CD4-positive, alpha-beta T cell (primary cell): ENCODE measurements at regions of chr12 and their contacts with region 1.

Region 1: DNA sequence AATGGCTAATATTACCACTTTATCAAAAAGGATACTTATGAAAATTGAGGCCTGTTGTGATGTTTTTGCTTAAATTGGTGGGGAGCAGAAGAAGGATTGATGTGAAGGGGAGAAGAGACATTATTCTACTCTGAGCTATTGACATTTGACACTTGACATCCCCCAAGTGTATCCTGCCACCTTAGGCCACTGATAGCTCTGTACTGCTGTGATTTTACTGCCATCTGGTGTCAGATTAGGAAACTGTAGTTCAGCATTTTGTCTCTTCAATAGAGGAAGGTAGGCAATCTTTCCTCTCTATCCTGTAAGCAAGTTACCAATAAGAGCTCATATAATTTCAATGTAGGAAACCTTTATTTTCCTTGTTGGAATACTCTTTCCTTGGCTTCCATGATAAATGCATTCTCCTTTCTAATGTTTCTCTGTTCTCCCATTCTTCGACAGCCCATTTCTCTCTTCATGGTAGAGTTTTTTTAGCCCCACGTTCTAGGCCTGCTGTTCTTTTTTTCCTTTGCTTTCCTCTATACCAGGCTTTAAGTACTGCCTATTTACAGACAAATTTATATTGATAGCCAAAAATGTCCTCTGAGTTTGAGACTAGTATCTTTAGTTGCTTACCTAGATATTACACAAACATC is 46.3 kb downstream of the PPHLN1 start:
- DNase-seq: peak in 5 of 14 experiments; percentile 3 to 74 (median 63)
- ATAC-seq: peak; percentile 95
- H3K4me3 ChIP-seq: no peak overlapping the region
- H3K4me3 Mint-ChIP-seq: no peak overlapping the region
- H3K27ac ChIP-seq: no peak overlapping the region
- H3K27ac Mint-ChIP-seq: no peak overlapping the region
- H3K4me1 ChIP-seq: no peaks in the 10 kb centered on the region
- H3K4me1 Mint-ChIP-seq: peaks cover 18% of the 10 kb centered on the region
- H3K27me3 ChIP-seq: no peaks in the 10 kb centered on the region
- H3K27me3 Mint-ChIP-seq: no peaks in the 10 kb centered on the region
- CTCF ChIP-seq: peak; percentile 75

Region 2: GRCh38 chr12:40946612-40947194 is 1425.6 kb before region 1 on chr12:
- CTCF ChIA-PET with region 1: no interaction called
- POLR2A ChIA-PET with region 1: no interaction called
- intact Hi-C with region 1: loop called (anchors 5 kb)
- DNase-seq: peak in 3 of 14 experiments; percentile 35 to 41 (median 35)
- ATAC-seq: no peak
- H3K4me3 ChIP-seq: no peak overlapping the region
- H3K4me3 Mint-ChIP-seq: no peak overlapping the region
- H3K27ac ChIP-seq: no peak overlapping the region
- H3K27ac Mint-ChIP-seq: no peak overlapping the region
- H3K4me1 ChIP-seq: no peaks in the 10 kb centered on the region
- H3K4me1 Mint-ChIP-seq: no peaks in the 10 kb centered on the region
- H3K27me3 ChIP-seq: peaks cover 0 to 3% of the 10 kb centered on the region in 2 experiments
- H3K27me3 Mint-ChIP-seq: peaks cover 4% of the 10 kb centered on the region
- CTCF ChIP-seq: peak; percentile 60

Region 3: GRCh38 chr12:42129595-42130204 is 242.6 kb before region 1 on chr12:
- CTCF ChIA-PET with region 1: interaction called, 3 read pairs
- POLR2A ChIA-PET with region 1: no interaction called
- intact Hi-C with region 1: loop called in 1 of 2 experiments (anchors 5 kb)
- DNase-seq: peak in 4 of 14 experiments; percentile 38 to 62 (median 53)
- ATAC-seq: peak; percentile 65
- H3K4me3 ChIP-seq: no peak overlapping the region
- H3K4me3 Mint-ChIP-seq: no peak overlapping the region
- H3K27ac ChIP-seq: no peak overlapping the region
- H3K27ac Mint-ChIP-seq: no peak overlapping the region
- H3K4me1 ChIP-seq: no peaks in the 10 kb centered on the region
- H3K4me1 Mint-ChIP-seq: peaks cover 49% of the 10 kb centered on the region
- H3K27me3 ChIP-seq: no peaks in the 10 kb centered on the region
- H3K27me3 Mint-ChIP-seq: no peaks in the 10 kb centered on the region
- CTCF ChIP-seq: peak; percentile 65